GM10248 (cell line): ENCODE measurements at regions of chr17 and their contacts with region 1.

Region 1: DNA sequence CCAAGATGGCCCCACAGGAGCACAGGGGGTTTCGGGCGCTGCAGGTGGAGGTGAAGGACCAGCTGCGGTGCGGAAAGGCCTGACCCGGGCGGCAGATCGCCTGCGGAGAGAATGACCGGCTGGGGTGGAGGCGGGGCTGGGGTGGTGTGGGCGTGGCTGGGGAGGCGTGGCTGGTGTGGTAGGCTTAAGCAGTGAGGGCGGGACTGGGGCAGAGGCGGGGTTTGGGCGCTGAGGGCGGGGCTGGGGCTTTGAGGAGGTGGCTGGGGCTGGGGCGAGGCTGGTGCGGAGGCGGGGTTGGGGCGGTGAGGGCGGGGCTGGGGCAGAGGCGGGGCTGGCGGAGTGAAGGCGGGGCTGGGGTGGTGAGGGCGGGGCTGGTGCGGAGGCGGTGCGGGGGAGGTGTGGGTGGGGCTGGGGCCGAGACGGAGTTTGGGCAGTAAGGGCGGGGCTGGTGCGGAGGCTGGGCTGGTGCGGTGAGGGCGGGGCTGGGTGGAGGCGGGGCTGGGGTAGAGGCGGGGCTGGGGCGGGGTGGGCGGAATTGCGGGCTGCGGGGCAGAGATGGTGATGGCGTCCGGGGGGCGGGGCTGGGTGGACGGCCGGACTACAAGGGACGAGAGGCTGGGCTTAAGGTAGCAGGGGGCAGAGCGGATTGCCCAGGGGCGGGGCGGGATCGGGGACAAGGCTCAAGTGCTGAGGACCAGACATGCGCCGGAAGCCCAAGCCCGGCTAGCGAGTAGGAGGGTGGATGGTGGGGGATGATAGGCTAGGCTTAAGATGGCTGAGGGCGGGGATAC is 9.9 kb upstream of the GSDMA start:
- DNase-seq: peak; percentile 98
- CTCF ChIP-seq: no peak

Region 2: DNA sequence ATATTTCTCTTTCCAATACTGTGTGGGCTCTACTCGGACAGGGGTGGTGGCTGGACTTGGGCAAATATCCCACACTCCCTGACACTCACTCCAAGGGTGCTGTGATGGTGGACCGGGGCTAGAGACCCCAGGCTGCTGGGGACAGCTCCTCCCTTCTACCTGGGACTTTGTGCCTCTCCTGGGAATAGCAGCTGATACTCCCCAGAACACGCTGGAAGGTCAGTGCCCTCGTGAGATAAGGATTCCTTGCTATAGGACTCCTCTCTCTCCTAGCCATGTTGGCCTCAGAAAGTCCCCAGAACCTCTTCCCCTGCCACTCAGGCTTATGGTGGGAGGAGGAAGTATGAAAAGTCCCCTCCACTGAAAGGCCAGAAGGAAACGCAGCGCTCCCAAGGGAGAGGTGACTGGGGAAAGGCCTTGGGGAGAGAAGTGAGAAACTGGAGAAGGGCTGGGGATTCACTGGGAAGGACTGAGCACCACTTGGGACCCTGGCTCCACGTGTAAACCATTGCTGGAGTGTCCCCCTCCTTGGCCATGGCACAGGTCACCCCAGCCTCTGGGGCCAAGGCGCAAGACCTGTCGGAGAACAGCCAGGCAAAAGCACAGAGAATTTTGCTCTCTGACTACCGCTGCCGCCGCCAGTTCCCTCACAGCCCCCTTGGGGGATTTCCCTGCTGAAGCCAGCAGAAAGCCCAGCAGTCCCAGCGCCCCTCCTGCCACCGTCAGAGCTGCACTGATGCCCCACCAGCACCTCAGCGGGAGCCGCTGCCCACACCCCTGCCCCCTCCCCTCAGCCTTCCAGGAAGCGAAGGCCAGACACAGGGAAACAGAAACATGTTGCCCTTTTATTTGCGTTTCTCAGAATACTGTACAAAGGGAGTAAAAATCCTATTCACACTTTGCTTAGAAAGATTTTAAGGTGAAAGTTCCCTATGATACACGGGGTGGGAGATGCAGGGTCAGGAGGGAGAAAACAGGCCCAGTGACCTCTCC is 32.4 kb before region 1 on chr17:
- CTCF ChIA-PET with region 1: no interaction called
- POLR2A ChIA-PET with region 1: no interaction called
- DNase-seq: peak; percentile 74
- CTCF ChIP-seq: no peak

Region 3: DNA sequence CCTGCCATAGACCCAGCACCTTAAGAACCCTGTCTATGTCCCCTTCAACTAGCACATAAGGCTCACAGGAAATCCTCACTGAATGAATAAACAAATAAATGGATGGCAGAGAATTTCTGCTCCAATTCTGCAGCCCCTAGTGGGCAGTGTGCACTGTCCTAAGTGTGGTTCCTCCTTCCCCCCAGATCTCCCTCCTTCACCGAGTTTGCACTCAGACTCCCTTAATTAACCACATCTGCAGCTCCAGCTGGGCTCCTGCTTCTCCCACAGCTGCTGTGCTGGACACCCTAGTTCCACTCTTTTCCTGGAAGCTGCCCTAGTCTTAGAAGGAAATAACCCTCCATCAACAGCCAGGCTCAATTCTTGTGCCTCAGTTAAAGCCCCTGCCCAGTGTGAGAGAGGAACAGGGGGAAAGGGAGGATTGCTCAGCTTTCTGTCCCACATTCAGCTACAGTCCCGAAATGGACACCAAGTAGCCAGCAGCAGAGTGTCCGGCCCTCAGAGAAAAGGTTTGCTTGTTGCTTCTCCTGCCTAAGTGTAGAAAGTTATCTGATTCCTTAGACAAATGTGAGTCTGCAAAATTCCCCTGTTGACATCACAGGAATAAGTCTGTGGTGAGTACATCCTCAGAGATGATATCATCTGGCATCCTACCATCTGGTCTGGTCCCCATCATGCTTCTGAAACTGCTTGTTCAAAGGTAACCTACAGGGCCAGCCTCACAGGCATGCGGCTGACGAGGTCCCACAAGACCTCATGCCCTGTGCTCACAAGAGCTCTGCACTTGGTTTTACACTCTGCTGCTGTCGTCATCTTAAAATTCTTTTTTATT is 13.1 kb before region 1 on chr17:
- CTCF ChIA-PET with region 1: interaction called, 18 read pairs
- POLR2A ChIA-PET with region 1: no interaction called
- DNase-seq: peak; percentile 59
- CTCF ChIP-seq: peak; percentile 25

Region 4: GRCh38 chr17:39972271-39972670 is 19.4 kb after region 1 on chr17:
- CTCF ChIA-PET with region 1: interaction called, 28 read pairs
- POLR2A ChIA-PET with region 1: no interaction called
- DNase-seq: no peak
- CTCF ChIP-seq: no peak

Region 5: GRCh38 chr17:40247926-40248495 is 295.1 kb after region 1 on chr17:
- CTCF ChIA-PET with region 1: no interaction called
- POLR2A ChIA-PET with region 1: no interaction called
- DNase-seq: no peak
- CTCF ChIP-seq: no peak